Mammary epithelial cell (primary cell): ENCODE measurements at regions of chr3 and their contacts with region 1.

Region 1: DNA sequence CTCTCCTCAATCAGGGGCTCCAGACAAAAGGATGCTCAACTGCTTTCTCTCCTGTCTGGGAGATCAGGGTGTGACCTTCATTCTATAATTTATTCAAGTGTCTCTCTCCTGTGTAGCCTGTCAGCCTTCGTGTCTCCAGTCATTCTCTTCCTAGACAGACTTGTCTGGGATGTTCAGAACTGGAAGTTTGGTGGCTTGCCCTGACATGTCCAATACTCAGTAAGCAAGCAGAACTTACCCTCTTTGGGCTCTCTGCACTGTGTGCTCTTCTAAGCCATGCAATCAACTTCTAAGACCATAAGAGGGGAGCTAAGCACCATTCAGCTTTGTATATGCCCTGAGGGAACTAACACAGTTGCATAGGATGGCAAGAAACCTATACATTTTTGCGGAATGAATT is 14.1 kb downstream of the ACKR2 start:
- DNase-seq: peak; percentile 93
- H3K4me3 ChIP-seq: no peak overlapping the region
- H3K27ac ChIP-seq: peak overlapping the region; percentile 91
- H3K4me1 ChIP-seq: peaks cover 37% of the 10 kb centered on the region
- H3K27me3 ChIP-seq: no peaks in the 10 kb centered on the region
- CTCF ChIP-seq: no peak

Region 2: DNA sequence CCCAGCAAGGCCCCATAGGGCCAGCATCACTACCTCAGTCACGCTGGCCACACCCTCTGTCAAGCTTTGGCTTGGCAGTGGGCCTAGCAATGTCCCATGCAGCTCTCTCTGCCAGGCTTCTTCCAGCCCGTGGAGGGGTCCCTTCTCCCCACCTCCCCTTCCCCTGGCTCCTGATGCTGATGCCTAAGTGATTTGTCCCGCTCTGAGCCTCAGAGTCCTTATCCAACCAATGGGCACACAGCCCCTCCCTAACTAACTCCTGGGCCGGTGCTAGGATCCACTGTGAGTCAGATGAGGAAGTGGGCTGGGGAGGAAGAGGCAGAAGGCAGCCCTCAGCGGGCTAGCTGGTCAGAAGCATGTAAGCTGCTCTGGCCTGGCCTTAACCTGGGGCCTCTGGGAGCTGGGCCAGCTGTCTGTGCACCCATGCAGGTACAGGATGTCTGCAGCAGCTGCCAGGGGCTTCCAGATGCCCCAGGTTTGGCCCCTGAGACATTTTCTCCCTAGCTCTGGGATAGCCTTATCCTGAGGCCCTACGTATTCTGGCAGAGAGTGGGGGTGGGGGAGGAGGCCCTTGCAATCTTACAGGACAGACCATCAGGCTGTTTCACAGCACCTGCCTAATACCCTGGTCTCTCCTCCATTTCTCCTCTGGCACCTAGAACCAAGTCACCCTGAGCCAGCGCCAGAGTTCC is 170.6 kb before region 1 on chr3:
- CTCF ChIA-PET with region 1: no interaction called
- dilution Hi-C with region 1: no loop called
- in situ Hi-C with region 1: no loop called
- intact Hi-C with region 1: loop called (anchors 10 kb)
- DNase-seq: peak; percentile 75
- H3K4me3 ChIP-seq: peak overlapping the region; percentile 5 to 75 (median 59)
- H3K27ac ChIP-seq: no peak overlapping the region
- H3K4me1 ChIP-seq: peaks cover 42% of the 10 kb centered on the region
- H3K27me3 ChIP-seq: no peaks in the 10 kb centered on the region
- CTCF ChIP-seq: no peak

Region 3: GRCh38 chr3:42804106-42804830 is 19.1 kb before region 1 on chr3 and contains the start of gene HIGD1A:
- CTCF ChIA-PET with region 1: no interaction called
- dilution Hi-C with region 1: no loop called
- in situ Hi-C with region 1: no loop called
- intact Hi-C with region 1: loop called (anchors 2 kb)
- DNase-seq: peak; percentile 98
- H3K4me3 ChIP-seq: peak within 1 kb of the TSS; percentile 86 to 94 (median 86)
- H3K27ac ChIP-seq: peak within 1 kb of the TSS; percentile 93
- H3K4me1 ChIP-seq: peaks cover 14% of the 10 kb centered on the region
- H3K27me3 ChIP-seq: no peaks in the 10 kb centered on the region
- CTCF ChIP-seq: no peak
- total RNA-seq, gene HIGD1A: 139 to 165 TPM

Region 4: GRCh38 chr3:43004282-43004681 is 180.9 kb after region 1 on chr3:
- CTCF ChIA-PET with region 1: no interaction called
- dilution Hi-C with region 1: no loop called
- in situ Hi-C with region 1: no loop called
- intact Hi-C with region 1: no loop called
- DNase-seq: peak; percentile 51
- H3K4me3 ChIP-seq: no peak overlapping the region
- H3K27ac ChIP-seq: no peak overlapping the region
- H3K4me1 ChIP-seq: peaks cover 14% of the 10 kb centered on the region
- H3K27me3 ChIP-seq: no peaks in the 10 kb centered on the region
- CTCF ChIP-seq: no peak